PC-9 (cell line): ENCODE measurements at regions of chr17 and their contacts with region 1.

Region 1: DNA sequence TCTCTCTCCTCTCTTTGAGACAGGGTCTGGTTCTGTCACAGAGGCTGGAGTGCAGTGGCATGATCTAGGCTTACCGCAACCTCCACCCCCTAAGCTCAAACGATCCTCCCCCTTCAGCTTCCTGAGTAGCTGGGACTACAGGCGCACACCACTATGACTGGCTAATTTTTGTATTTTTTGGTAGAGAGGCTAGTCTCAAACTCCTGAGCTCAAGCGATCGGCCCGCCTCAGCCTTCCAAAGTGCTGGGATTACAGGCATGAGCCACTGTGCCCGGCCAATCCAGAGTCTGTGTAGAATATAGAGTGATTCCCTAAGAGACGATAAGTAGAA is 65.8 kb upstream of the RPH3AL start:
- DNase-seq: no peak
- H3K4me3 ChIP-seq: no peak overlapping the region
- H3K27ac ChIP-seq: no peak overlapping the region
- H3K4me1 ChIP-seq: no peaks in the 10 kb centered on the region
- H3K27me3 ChIP-seq: no peaks in the 10 kb centered on the region
- CTCF ChIP-seq: no peak

Region 2: GRCh38 chr17:705863-706262 is 287.5 kb after region 1 on chr17:
- CTCF ChIA-PET with region 1: interaction called, 15 read pairs
- POLR2A ChIA-PET with region 1: no interaction called
- intact Hi-C with region 1: no loop called
- DNase-seq: no peak
- H3K4me3 ChIP-seq: no peak overlapping the region
- H3K27ac ChIP-seq: no peak overlapping the region
- H3K4me1 ChIP-seq: no peaks in the 10 kb centered on the region
- H3K27me3 ChIP-seq: no peaks in the 10 kb centered on the region
- CTCF ChIP-seq: no peak